B cell (primary cell): ENCODE measurements at regions of chr5 and their contacts with region 1.

Region 1: GRCh38 chr5:180315762-180316212 is 23.9 kb upstream of the MAPK9 start:
- DNase-seq: peak; percentile 74
- ATAC-seq: peak; percentile 92
- H3K4me3 ChIP-seq: no peak overlapping the region
- H3K4me3 Mint-ChIP-seq: no peak overlapping the region
- H3K27ac ChIP-seq: no peak overlapping the region
- H3K27ac Mint-ChIP-seq: peak overlapping the region; percentile 21
- H3K4me1 ChIP-seq: no peaks in the 10 kb centered on the region
- H3K4me1 Mint-ChIP-seq: no peaks in the 10 kb centered on the region
- H3K27me3 ChIP-seq: peaks cover 0 to 2% (median 0%) of the 10 kb centered on the region in 4 experiments
- H3K27me3 Mint-ChIP-seq: peaks cover 4% of the 10 kb centered on the region
- CTCF ChIP-seq: peak; percentile 99

Region 2: GRCh38 chr5:180297587-180298282 is 18.1 kb before region 1 on chr5:
- CTCF ChIA-PET with region 1: interaction called, 109 read pairs
- POLR2A ChIA-PET with region 1: interaction called, 10 read pairs
- intact Hi-C with region 1: loop called (anchors 1 kb)
- DNase-seq: no peak
- ATAC-seq: no peak
- H3K4me3 ChIP-seq: no peak overlapping the region
- H3K4me3 Mint-ChIP-seq: no peak overlapping the region
- H3K27ac ChIP-seq: no peak overlapping the region
- H3K27ac Mint-ChIP-seq: no peak overlapping the region
- H3K4me1 ChIP-seq: peaks cover 21 to 23% of the 10 kb centered on the region in 2 donors
- H3K4me1 Mint-ChIP-seq: peaks cover 28% of the 10 kb centered on the region
- H3K27me3 ChIP-seq: no peaks in the 10 kb centered on the region
- H3K27me3 Mint-ChIP-seq: peaks cover 16% of the 10 kb centered on the region
- CTCF ChIP-seq: no peak

Region 3: DNA sequence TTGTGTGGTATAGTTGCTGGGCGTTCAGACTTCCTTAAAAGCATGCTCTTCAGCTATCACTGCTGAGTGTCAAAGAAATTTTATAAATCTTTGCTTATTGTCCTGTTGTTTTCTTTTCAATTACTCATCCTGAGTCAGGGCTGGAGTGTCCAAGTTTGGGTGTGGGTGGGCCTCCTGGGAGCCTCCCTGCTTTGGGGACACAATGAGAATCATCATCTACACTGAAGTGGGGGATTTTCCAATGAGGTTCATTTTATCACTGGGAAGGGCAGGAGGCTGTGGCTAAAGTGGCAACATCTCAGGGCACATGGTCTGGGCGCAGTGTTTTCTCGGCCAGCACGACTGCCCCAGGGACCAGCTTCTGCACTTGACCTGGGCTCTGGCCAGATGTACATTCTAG is 17.9 kb after region 1 on chr5:
- CTCF ChIA-PET with region 1: interaction called, 36 read pairs
- POLR2A ChIA-PET with region 1: no interaction called
- intact Hi-C with region 1: loop called (anchors 1 kb)
- DNase-seq: no peak
- ATAC-seq: no peak
- H3K4me3 ChIP-seq: no peak overlapping the region
- H3K4me3 Mint-ChIP-seq: no peak overlapping the region
- H3K27ac ChIP-seq: no peak overlapping the region
- H3K27ac Mint-ChIP-seq: no peak overlapping the region
- H3K4me1 ChIP-seq: peaks cover 0 to under 1% of the 10 kb centered on the region in 2 donors
- H3K4me1 Mint-ChIP-seq: no peaks in the 10 kb centered on the region
- H3K27me3 ChIP-seq: peaks cover 0 to 8% (median 0%) of the 10 kb centered on the region in 4 experiments
- H3K27me3 Mint-ChIP-seq: peaks cover 23% of the 10 kb centered on the region
- CTCF ChIP-seq: no peak